ENCODE measurements at regions of chr14 and their contacts with region 1.

Region 1: GRCh38 chr14:88181072-88181471 is 142.0 kb downstream of the KCNK10 start:
- DNase-seq: no peak
- H3K4me3 ChIP-seq: no peak overlapping the region
- H3K27ac ChIP-seq: no peak overlapping the region
- H3K27me3 ChIP-seq: no peaks in the 10 kb centered on the region
- CTCF ChIP-seq: no peak

Region 2: GRCh38 chr14:88212691-88213090 is 31.6 kb after region 1 on chr14:
- intact Hi-C with region 1: no loop called
- DNase-seq: peak in 1 of 10 donors; percentile 48
- H3K4me3 ChIP-seq: no peak overlapping the region
- H3K27ac ChIP-seq: no peak overlapping the region
- H3K27me3 ChIP-seq: no peaks in the 10 kb centered on the region
- CTCF ChIP-seq: no peak

Region 3: DNA sequence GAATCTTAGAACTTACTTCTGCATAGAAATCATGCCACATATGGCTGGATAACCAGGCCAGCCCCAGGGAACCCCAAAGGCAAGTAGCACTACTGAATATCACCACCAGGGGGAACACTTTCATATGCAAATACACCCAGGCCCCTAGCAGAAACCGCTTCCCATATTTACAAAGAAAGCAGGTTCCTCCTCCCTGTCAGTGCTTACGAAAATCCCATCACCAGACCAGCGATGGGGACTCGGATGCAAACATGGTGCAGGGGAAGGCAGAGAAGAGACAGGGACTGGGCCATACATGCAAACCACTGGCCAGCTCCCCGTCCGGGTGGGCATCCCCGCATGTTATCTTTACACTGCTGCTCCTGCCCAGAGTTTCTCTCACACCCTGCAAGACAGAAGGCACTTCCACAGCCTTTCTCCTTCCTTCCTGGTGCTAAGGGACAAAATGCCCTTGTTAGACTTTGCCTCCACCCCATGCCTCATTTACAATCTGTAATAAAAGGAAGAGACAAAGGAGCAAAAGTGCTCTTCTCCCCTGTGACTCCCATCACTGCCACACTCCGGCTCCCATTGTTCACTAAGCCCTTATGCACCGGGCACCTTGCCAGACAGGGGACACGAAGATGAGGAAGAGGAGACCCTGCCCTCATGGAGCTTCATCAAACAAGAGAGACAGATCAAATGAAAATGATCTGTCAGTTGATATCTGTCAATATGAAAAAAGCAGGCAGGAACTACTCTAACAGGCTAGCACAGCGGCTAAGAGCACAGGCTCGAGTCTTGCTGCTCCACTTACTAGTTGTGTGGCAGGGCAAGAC is 311.4 kb after region 1 on chr14:
- intact Hi-C with region 1: loop called in 1 of 2 experiments (anchors 5 kb)
- DNase-seq: peak in 4 of 10 donors; percentile 49 to 70 (median 62)
- H3K4me3 ChIP-seq: no peak overlapping the region
- H3K27ac ChIP-seq: peak overlapping the region in 13 of 59 donors; percentile 4 to 66 (median 25)
- H3K27me3 ChIP-seq: no peaks in the 10 kb centered on the region
- CTCF ChIP-seq: peak; percentile 75 to 97 (median 90)